Activated CD4-positive, alpha-beta T cell treated with anti-CD3 and anti-CD28 coated beads for 36 hours (primary cell): ENCODE measurements at regions of chr11 and their contacts with region 1.

Region 1: GRCh38 chr11:35617687-35618496 is at the start of gene FJX1:
- DNase-seq: peak; percentile 37
- ATAC-seq: peak; percentile 15
- H3K4me3 Mint-ChIP-seq: peak within 1 kb of the TSS; percentile 55
- H3K27ac Mint-ChIP-seq: no peak within 1 kb of the TSS
- H3K4me1 Mint-ChIP-seq: peaks cover 11% of the 10 kb centered on the region
- H3K27me3 Mint-ChIP-seq: peaks cover 51% of the 10 kb centered on the region
- total RNA-seq, gene FJX1: 0.69 to 0.74 TPM

Region 2: DNA sequence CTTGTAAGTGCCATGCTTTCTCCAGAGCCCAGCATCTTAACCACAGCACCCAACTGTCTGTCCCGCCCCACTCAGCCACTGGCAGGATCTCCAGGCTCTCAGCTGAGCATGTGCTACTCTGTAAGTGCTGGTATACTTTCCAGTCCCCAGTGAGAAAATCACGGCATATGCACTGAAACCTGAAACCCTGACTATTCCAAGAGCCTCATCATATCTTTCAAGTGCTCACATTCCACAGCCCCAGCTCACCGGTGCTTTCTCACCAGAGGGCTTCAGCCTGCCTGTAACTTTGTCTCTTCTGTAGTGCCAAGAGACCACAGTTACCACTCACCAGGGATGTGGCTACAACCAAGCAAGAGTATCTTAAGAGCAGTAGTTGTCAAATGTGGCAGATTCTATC is 68.1 kb before region 1 on chr11:
- CTCF ChIA-PET with region 1: no interaction called
- POLR2A ChIA-PET with region 1: no interaction called
- intact Hi-C with region 1: no loop called
- DNase-seq: no peak
- ATAC-seq: no peak
- H3K4me3 Mint-ChIP-seq: no peak overlapping the region
- H3K27ac Mint-ChIP-seq: no peak overlapping the region
- H3K4me1 Mint-ChIP-seq: no peaks in the 10 kb centered on the region
- H3K27me3 Mint-ChIP-seq: peaks cover 14% of the 10 kb centered on the region

Region 3: GRCh38 chr11:35735903-35736302 is 118.0 kb after region 1 on chr11:
- CTCF ChIA-PET with region 1: no interaction called
- POLR2A ChIA-PET with region 1: no interaction called
- intact Hi-C with region 1: no loop called
- DNase-seq: no peak
- ATAC-seq: no peak
- H3K4me3 Mint-ChIP-seq: no peak overlapping the region
- H3K27ac Mint-ChIP-seq: no peak overlapping the region
- H3K4me1 Mint-ChIP-seq: peaks cover 30% of the 10 kb centered on the region
- H3K27me3 Mint-ChIP-seq: no peaks in the 10 kb centered on the region

Region 4: DNA sequence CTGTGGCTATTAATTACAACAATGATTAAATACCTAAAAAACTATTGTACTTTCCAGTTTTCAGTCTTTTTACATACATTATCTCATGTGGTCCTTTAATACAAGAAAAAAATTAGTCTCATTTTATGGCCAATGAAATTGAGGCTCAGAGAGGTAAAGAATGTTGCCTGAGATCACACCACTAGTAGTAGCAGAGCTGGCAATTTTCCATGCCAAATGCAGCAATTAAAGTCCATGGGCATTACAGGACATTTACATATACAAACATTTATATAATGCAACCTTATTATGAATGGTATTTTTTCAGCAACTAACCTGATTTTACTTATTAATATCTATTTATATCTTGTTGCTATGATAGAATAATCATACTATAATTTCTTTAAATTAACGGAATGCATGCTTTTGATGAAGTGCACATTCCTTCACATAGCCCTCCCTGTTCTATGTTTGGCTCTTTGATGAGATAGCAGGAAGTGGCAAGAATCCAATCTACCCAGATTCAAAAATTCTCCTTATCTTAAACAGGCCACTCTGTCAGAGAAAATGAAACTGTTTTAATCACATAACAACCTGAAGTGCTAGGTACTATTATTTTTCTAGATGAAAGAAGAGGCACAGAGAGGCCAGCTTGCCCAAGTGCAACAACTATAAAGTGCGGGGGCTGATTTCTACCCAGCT is 205.1 kb after region 1 on chr11:
- CTCF ChIA-PET with region 1: interaction called, 16 read pairs
- POLR2A ChIA-PET with region 1: no interaction called
- intact Hi-C with region 1: loop called (anchors 1 kb)
- DNase-seq: no peak
- ATAC-seq: no peak
- H3K4me3 Mint-ChIP-seq: no peak overlapping the region
- H3K27ac Mint-ChIP-seq: no peak overlapping the region
- H3K4me1 Mint-ChIP-seq: peaks cover 12% of the 10 kb centered on the region
- H3K27me3 Mint-ChIP-seq: no peaks in the 10 kb centered on the region

Region 5: DNA sequence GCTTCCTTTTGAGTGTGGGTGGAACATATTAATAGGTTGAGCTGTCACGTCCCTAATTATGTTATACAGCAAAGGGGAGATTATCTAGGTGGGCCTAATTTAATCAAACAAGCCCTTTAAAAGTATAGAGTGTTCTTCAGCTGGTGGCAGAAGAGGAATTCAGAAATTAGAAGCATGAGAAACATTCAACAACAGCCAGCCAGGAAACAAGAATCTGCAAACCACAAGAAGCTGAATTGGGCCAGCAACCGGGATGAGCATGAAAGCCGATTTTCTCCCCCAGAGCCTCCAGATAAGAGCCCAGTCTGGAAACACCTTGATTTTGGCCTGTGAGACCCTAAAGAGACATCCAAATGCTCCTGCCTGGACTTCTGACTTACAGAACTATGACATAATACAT is 220.2 kb after region 1 on chr11:
- CTCF ChIA-PET with region 1: no interaction called
- POLR2A ChIA-PET with region 1: no interaction called
- intact Hi-C with region 1: no loop called
- DNase-seq: no peak
- ATAC-seq: no peak
- H3K4me3 Mint-ChIP-seq: no peak overlapping the region
- H3K27ac Mint-ChIP-seq: no peak overlapping the region
- H3K4me1 Mint-ChIP-seq: no peaks in the 10 kb centered on the region
- H3K27me3 Mint-ChIP-seq: peaks cover 10% of the 10 kb centered on the region

Region 6: GRCh38 chr11:35866601-35867000 is 248.7 kb after region 1 on chr11:
- CTCF ChIA-PET with region 1: no interaction called
- POLR2A ChIA-PET with region 1: no interaction called
- intact Hi-C with region 1: no loop called
- DNase-seq: no peak
- ATAC-seq: no peak
- H3K4me3 Mint-ChIP-seq: no peak overlapping the region
- H3K27ac Mint-ChIP-seq: no peak overlapping the region
- H3K4me1 Mint-ChIP-seq: no peaks in the 10 kb centered on the region
- H3K27me3 Mint-ChIP-seq: peaks cover 2% of the 10 kb centered on the region

Region 7: DNA sequence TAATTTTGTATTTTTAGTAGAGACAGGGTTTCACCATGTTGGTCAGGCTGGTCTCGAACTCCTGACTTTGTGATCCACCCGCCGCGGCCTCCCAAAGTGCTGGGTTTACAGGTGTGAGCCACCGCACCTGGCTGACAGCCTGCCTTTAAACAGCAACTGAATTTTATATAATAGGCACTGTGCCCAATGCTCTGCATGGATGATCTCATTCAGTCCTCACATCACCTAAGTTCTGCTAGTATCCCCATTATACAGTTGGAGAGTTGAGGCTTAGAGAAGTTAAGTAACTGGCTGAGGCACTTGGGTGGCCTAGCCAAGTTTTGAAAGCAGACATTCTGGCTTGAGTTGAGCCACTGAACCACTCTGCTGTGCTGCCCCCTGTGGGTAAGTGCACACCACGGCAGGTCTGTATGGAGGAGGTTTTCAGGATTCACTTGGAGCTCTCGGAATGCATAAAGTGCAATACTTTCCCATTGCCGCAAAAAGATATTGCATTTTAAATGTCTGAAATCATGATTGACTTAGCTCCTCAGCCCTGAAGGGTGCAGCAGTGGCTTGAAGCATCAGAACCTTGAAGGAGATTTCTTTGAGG is 438.4 kb after region 1 on chr11:
- CTCF ChIA-PET with region 1: no interaction called
- POLR2A ChIA-PET with region 1: no interaction called
- intact Hi-C with region 1: loop called (anchors 1 to 10 kb)
- DNase-seq: peak; percentile 19
- ATAC-seq: no peak
- H3K4me3 Mint-ChIP-seq: no peak overlapping the region
- H3K27ac Mint-ChIP-seq: no peak overlapping the region
- H3K4me1 Mint-ChIP-seq: no peaks in the 10 kb centered on the region
- H3K27me3 Mint-ChIP-seq: no peaks in the 10 kb centered on the region

Region 8: DNA sequence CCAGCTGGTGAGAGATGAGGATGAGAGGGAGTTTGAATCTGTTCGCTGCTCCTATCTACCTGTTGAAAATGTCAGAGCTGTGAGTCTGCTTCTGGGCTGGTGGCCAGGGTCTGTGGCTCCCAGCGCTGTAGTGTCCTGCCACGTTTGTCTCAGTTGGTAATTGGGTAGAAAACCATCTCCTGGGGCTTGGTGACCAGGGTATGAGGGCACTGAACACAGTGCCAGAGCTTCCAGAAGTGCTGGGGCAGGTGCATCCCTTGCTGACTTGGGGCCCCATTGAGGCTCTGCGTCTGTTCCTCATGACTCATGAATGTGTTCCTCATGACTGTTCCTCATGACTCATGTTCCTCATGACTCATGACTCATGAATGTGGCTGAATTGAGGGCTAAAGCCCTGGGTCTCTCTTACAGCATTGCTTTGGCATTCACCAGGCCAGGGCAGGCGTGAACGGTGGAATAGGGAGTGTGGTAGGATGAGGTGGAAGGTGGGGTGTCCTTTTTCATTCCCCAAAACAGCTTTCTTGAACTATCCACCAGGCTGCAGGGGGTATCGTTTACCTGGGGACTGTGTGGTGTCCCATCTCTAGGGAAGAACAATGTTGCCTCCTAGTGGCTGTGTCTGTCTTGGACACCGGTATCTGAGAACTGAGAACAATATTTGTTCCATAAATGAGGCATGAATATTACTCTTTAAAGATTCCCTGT is 531.8 kb after region 1 on chr11:
- CTCF ChIA-PET with region 1: no interaction called
- POLR2A ChIA-PET with region 1: no interaction called
- intact Hi-C with region 1: loop called (anchors 2 to 5 kb)
- DNase-seq: peak; percentile 72
- ATAC-seq: peak; percentile 98
- H3K4me3 Mint-ChIP-seq: no peak overlapping the region
- H3K27ac Mint-ChIP-seq: no peak overlapping the region
- H3K4me1 Mint-ChIP-seq: peaks cover 16% of the 10 kb centered on the region
- H3K27me3 Mint-ChIP-seq: peaks cover 13% of the 10 kb centered on the region

Region 9: GRCh38 chr11:36265793-36266628 is 648.1 kb after region 1 on chr11:
- CTCF ChIA-PET with region 1: interaction called, 7 read pairs
- POLR2A ChIA-PET with region 1: no interaction called
- intact Hi-C with region 1: loop called (anchors 1 kb)
- DNase-seq: peak; percentile 80
- ATAC-seq: peak; percentile 77
- H3K4me3 Mint-ChIP-seq: no peak overlapping the region
- H3K27ac Mint-ChIP-seq: no peak overlapping the region
- H3K4me1 Mint-ChIP-seq: no peaks in the 10 kb centered on the region
- H3K27me3 Mint-ChIP-seq: peaks cover 8% of the 10 kb centered on the region

Region 10: DNA sequence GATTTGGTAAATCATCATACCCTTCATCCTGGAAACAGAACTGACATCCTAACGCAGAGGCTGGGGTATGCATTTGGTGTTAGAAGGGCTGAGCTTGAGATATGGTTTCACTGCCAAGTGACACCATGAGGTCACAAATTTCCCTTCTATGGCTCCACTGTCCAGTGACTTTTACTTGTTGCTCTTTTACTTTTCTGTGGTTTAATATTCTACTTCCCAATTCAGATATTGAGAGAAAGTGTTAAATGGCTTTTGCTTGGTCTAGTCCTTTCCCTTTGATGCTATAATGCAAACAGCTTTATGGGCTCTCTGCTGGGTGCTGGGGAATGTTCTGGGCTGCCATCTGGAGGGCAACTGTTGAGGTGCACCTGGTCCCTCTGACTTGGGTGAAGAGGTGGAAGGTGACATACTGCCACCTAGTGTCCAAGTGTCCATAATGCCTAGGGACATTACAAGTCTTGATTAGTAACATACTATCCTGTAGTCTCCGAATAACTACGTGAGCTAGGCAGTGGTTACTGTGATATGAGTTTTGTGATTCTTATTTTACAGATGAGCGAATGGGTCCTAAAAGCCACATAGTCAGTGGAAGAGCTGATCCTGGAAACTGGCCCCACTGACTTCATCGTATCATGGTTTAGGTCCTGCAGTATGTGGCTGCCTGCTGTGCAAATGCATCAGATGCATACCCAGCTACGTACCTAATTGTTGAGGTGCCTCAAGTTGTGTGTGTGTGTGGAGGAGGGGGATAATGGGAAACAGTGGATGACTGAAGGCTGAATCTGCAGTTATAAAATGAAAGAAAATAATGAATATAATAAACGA is 1129.2 kb after region 1 on chr11:
- CTCF ChIA-PET with region 1: no interaction called
- POLR2A ChIA-PET with region 1: no interaction called
- intact Hi-C with region 1: loop called in 1 of 2 experiments (anchors 10 kb)
- DNase-seq: peak; percentile 90
- ATAC-seq: peak; percentile 99
- H3K4me3 Mint-ChIP-seq: no peak overlapping the region
- H3K27ac Mint-ChIP-seq: no peak overlapping the region
- H3K4me1 Mint-ChIP-seq: peaks cover 8% of the 10 kb centered on the region
- H3K27me3 Mint-ChIP-seq: peaks cover 27% of the 10 kb centered on the region